ENCODE measurements at regions of chr17 and their contacts with region 1.

Region 1: DNA sequence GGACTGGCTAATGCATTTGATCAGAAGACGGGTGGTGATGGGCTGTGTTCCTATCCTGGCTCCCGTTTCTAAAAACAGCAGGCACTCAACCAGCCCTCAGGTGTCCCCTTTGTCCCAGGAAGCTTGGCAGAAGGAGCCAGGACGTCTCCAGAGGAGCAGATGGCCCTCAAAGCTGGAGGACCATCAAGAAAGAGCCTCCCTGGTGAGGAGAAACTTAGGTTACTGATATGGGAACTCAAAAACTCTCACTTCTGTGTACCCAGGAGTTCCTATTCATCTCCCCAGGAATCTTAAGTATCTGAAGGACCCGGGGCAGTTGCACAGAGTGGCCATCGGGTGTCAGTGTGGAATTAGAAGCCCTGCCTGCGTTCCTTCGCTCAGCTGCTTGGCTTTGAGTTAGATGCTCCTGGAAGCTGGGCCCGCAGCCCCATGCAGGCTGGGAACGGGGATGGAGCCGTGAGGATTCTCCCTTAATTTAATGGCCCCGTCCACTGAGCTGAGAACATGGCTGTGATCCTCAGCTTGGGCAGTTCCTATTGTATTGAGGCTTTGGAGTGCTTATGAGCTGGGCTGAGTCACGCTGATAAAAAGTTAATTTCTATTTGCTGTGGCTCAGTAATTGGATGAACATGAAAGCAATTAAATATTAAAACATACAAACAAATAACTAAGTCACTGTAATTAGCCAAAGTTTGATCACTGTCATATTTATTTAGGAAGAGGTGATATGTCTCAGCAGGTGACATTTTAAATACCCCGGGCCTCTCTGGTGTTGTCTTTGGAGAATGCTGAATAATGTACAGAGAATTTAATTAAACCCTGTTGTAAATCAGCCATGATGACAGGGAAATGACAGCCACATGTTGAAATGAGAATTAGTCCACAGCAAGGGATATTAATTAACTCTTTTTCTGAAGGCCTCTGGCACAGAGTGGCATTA is 402.1 kb downstream of the SEC14L1 start:
- DNase-seq: peak; percentile 84

Region 2: DNA sequence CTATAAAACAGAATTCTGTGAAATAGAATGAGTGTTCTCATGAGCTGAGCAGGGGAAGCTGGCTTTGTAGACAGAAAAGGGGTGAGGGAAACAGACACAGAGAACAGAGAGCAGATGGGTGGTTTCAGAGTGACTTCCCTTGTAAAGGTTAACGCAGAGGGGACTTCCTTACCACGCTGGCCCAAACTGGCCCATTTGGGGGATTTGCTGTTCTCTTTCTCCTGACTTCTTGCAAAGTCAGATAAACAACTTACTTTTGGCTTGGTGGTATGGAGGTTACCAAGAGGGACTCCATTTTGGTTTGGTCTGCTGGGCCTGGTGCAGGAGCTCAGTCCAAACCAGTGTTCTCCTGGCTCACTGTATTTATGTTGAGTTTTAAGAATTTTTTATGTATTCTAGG is 353.7 kb before region 1 on chr17:
- intact Hi-C with region 1: no loop called
- DNase-seq: no peak

Region 3: GRCh38 chr17:77602062-77602746 is 59.4 kb after region 1 on chr17:
- intact Hi-C with region 1: loop called (anchors 2 kb)
- DNase-seq: peak; percentile 89

Region 4: DNA sequence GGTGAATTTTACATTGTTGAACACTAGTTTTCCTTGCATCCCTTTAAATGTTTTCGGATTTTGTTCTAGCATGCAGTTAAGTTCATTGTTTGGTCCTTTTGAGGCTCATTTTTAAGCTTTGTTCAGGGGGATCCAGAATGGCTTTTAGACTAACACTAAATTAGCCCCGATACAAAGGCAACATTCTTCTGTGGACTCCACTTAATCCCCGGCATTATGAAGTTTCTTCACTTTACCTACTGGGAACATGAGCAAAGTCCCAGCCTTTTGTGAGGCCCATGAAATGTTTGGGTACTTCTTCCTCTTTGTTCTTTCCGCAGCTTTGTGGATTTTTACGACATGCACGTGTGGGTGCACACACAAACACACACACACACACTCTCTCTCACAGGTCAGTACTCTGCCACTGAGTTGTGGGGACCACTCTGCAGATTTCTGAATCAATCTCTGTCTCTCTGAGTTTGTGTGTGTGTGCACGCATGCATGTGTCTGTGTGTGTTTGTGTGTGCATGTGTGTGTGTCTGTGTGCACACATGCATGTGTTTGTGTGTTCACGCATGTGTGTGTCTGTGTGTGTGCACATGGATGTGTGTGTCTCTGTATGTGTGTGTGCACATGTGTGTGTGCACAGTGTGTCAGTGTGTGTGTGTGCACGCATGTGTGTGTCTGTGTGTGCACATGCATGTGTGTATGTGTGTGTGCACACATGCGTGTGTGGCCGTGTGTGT is 175.3 kb after region 1 on chr17:
- intact Hi-C with region 1: no loop called
- DNase-seq: no peak

Region 5: GRCh38 chr17:77734341-77735080 is 191.7 kb after region 1 on chr17:
- intact Hi-C with region 1: loop called (anchors 2 kb)
- DNase-seq: peak; percentile 94

Region 6: GRCh38 chr17:78013683-78014467 is 471.1 kb after region 1 on chr17:
- intact Hi-C with region 1: loop called (anchors 2 kb)
- DNase-seq: no peak